ENCODE measurements at regions of chr6 and their contacts with region 1.

Region 1: DNA sequence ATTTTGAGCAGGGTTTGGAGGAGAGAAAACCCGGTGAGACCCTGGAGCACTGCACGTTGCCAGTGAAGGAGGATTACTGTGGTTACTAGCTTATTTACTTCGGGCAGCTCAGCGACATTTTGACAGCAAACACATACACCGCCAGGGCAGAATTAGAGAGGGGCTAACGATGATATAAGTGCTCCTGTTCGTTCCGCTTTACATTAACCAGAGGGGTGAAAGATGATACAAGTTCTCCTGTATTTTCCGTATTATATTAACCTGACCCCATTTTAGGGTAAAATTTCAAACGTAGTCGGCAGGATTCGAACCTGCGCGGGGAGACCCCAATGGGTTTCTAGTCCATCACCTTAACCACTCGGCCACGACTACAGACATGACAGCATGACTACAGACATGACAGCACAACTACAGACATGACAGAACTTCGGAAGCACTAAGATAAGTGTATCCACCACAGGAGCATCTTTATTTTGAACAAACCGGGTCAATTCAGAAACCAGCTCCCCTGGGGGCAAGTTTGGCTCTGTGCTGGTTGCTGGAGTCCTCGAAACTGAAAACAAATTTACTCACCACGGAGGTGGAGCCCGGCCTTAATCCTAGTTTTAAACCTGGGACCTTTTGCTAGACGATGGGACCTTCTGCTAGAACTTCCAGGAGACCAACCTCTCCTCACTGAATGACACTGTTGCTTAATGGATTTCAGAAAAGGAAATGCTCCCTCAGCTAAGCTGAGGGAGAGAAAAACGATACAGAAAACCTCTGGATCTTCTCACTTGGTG is 80.4 kb upstream of the ZNF184 start:
- DNase-seq: peak; percentile 69 to 94 (median 77)
- ATAC-seq: peak; percentile 83
- H3K4me3 ChIP-seq: peak overlapping the region; percentile 52
- H3K27ac ChIP-seq: peak overlapping the region; percentile 93
- H3K4me1 ChIP-seq: 0 out of 5 replicates have a peak, but pooled peaks cover 0 to 11% of the 10 kb centered on the region in 2 experiments
- H3K27me3 ChIP-seq: no peaks in the 10 kb centered on the region
- CTCF ChIP-seq: 0 out of 6 replicates have a peak, but pooled peaks of 1 of the 3 experiments have one; percentile 1
- EP300 ChIP-seq: peak; percentile 79
- POLR2A ChIP-seq: no peak
- RAD21 ChIP-seq: peak; percentile 16 to 27; a peak in 1 of 4 replicates

Region 2: GRCh38 chr6:27332692-27333641 is 220.3 kb before region 1 on chr6:
- CTCF ChIA-PET with region 1: no interaction called
- POLR2A ChIA-PET with region 1: no interaction called
- in situ Hi-C with region 1: no loop called
- intact Hi-C with region 1: no loop called
- DNase-seq: peak; percentile 67 to 91 (median 78)
- ATAC-seq: peak; percentile 92
- H3K4me3 ChIP-seq: peak overlapping the region; percentile 64
- H3K27ac ChIP-seq: peak overlapping the region; percentile 82
- H3K4me1 ChIP-seq: peaks cover 0 to 5% of the 10 kb centered on the region in 2 experiments; a peak in 2 of 5 replicates
- H3K27me3 ChIP-seq: no peaks in the 10 kb centered on the region
- CTCF ChIP-seq: peak in 1 of 3 experiments; percentile 18; a peak in 1 of 6 replicates
- EP300 ChIP-seq: peak; percentile 71
- POLR2A ChIP-seq: no peak
- RAD21 ChIP-seq: no peak; a peak in 2 of 4 replicates

Region 3: GRCh38 chr6:27518881-27519795 is 34.2 kb before region 1 on chr6:
- CTCF ChIA-PET with region 1: no interaction called
- POLR2A ChIA-PET with region 1: interaction called, 7 read pairs
- in situ Hi-C with region 1: no loop called
- intact Hi-C with region 1: loop called (anchors 2 kb)
- DNase-seq: peak; percentile 66 to 93 (median 69)
- ATAC-seq: peak; percentile 89
- H3K4me3 ChIP-seq: peak overlapping the region; percentile 69
- H3K27ac ChIP-seq: peak overlapping the region; percentile 82
- H3K4me1 ChIP-seq: peaks cover 4 to 7% of the 10 kb centered on the region in 2 experiments; a peak in 3 of 5 replicates
- H3K27me3 ChIP-seq: no peaks in the 10 kb centered on the region
- CTCF ChIP-seq: peak; percentile 77 to 90 (median 86)
- EP300 ChIP-seq: peak; percentile 63
- POLR2A ChIP-seq: peak; percentile 66
- RAD21 ChIP-seq: peak; percentile 76 to 80

Region 4: GRCh38 chr6:27575594-27576361 is 22.5 kb after region 1 on chr6:
- CTCF ChIA-PET with region 1: no interaction called
- POLR2A ChIA-PET with region 1: interaction called, 10 read pairs
- in situ Hi-C with region 1: no loop called
- intact Hi-C with region 1: no loop called
- DNase-seq: peak; percentile 47 to 85 (median 62)
- ATAC-seq: peak; percentile 85
- H3K4me3 ChIP-seq: peak overlapping the region; percentile 9; the same call in 1 of the 2 replicates
- H3K27ac ChIP-seq: 0 out of 3 replicates have a peak overlapping the region, but pooled peaks have one; percentile 7
- H3K4me1 ChIP-seq: peaks cover 3 to 9% of the 10 kb centered on the region in 2 experiments; a peak in 3 of 5 replicates
- H3K27me3 ChIP-seq: no peaks in the 10 kb centered on the region
- CTCF ChIP-seq: 0 out of 6 replicates have a peak, but pooled peaks of 1 of the 3 experiments have one; percentile 9
- EP300 ChIP-seq: peak; percentile 59; the same call in 1 of the 2 replicates
- POLR2A ChIP-seq: no peak
- RAD21 ChIP-seq: peak in 1 of 2 experiments; percentile 3; a peak in 1 of 4 replicates

Region 5: GRCh38 chr6:27582928-27583725 is 29.8 kb after region 1 on chr6:
- CTCF ChIA-PET with region 1: no interaction called
- POLR2A ChIA-PET with region 1: interaction called, 11 read pairs
- in situ Hi-C with region 1: no loop called
- intact Hi-C with region 1: no loop called
- DNase-seq: peak; percentile 51 to 88 (median 68)
- ATAC-seq: peak; percentile 88
- H3K4me3 ChIP-seq: peak overlapping the region; percentile 40
- H3K27ac ChIP-seq: no peak overlapping the region; the same call in 2 of the 3 replicates
- H3K4me1 ChIP-seq: peaks cover 6 to 22% of the 10 kb centered on the region in 2 experiments; a peak in 3 of 5 replicates
- H3K27me3 ChIP-seq: no peaks in the 10 kb centered on the region
- CTCF ChIP-seq: no peak
- EP300 ChIP-seq: peak; percentile 61; the same call in 1 of the 2 replicates
- POLR2A ChIP-seq: no peak
- RAD21 ChIP-seq: 0 out of 4 replicates have a peak, but pooled peaks of 1 of the 2 experiments have one; percentile 3

Region 6: GRCh38 chr6:27592481-27593199 is 39.3 kb after region 1 on chr6:
- CTCF ChIA-PET with region 1: no interaction called
- POLR2A ChIA-PET with region 1: interaction called, 5 read pairs
- in situ Hi-C with region 1: no loop called
- intact Hi-C with region 1: loop called (anchors 2 kb)
- DNase-seq: peak; percentile 76 to 94 (median 86)
- ATAC-seq: peak; percentile 94
- H3K4me3 ChIP-seq: peak overlapping the region; percentile 48
- H3K27ac ChIP-seq: peak overlapping the region; percentile 53
- H3K4me1 ChIP-seq: peaks cover 8 to 13% of the 10 kb centered on the region in 2 experiments; a peak in 4 of 5 replicates
- H3K27me3 ChIP-seq: no peaks in the 10 kb centered on the region
- CTCF ChIP-seq: peak in 1 of 3 experiments; percentile 20; a peak in 2 of 6 replicates
- EP300 ChIP-seq: peak; percentile 84
- POLR2A ChIP-seq: no peak
- RAD21 ChIP-seq: peak; percentile 33 to 47; a peak in 3 of 4 replicates

Region 7: GRCh38 chr6:27662769-27663168 is 109.5 kb after region 1 on chr6:
- CTCF ChIA-PET with region 1: no interaction called
- POLR2A ChIA-PET with region 1: no interaction called
- in situ Hi-C with region 1: no loop called
- intact Hi-C with region 1: no loop called
- DNase-seq: no peak
- ATAC-seq: no peak; the same call in 2 of the 3 replicates
- H3K4me3 ChIP-seq: no peak overlapping the region
- H3K27ac ChIP-seq: no peak overlapping the region
- H3K4me1 ChIP-seq: no peaks in the 10 kb centered on the region; a peak in 1 of 5 replicates
- H3K27me3 ChIP-seq: no peaks in the 10 kb centered on the region
- CTCF ChIP-seq: no peak
- EP300 ChIP-seq: no peak
- POLR2A ChIP-seq: no peak
- RAD21 ChIP-seq: no peak